Colonic mucosa (tissue), 4 donors: ENCODE measurements at regions of chr3 and their contacts with region 1.

Region 1: GRCh38 chr3:50971487-50971924 is 296.8 kb downstream of the DOCK3 start:
- DNase-seq: peak; percentile 46
- H3K4me3 ChIP-seq: no peak overlapping the region
- H3K27ac ChIP-seq: no peak overlapping the region
- H3K4me1 ChIP-seq: no peaks in the 10 kb centered on the region
- H3K27me3 ChIP-seq: no peaks in the 10 kb centered on the region
- CTCF ChIP-seq: peak; percentile 82

Region 2: DNA sequence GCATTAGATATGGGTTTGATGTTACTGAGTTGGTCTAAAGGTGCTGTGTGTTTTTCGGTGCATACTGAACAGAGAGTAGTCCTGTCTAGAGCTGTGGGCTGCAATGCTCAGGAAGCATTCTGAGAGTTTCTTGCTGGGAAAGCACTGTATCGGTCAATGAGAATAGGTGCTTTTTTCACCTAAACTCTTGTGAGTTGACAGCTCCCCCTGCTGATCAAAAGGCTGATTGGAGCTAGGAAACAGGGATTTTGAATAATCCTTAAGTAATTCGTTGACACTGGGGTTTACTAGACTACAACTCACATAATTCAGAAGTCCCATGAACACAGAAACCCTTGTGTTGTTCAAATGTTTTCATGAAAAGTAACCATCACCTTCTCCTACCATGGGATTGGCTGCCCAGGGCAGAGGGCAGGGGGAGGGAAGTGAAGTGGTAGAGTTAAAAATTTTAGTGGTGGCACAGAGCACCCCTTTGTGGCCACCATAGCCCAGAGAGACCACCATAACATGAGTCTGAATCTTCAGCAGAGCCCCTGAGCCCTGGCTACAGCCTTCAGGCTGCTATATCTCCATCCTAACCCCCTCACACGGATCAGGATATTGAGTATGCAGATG is 400.5 kb after region 1 on chr3:
- intact Hi-C with region 1: loop called (anchors 5 kb)
- DNase-seq: peak; percentile 67
- H3K4me3 ChIP-seq: no peak overlapping the region
- H3K27ac ChIP-seq: no peak overlapping the region
- H3K4me1 ChIP-seq: no peaks in the 10 kb centered on the region
- H3K27me3 ChIP-seq: no peaks in the 10 kb centered on the region
- CTCF ChIP-seq: peak; percentile 59